ENCODE measurements at regions of chr4 and their contacts with region 1.

Region 1: DNA sequence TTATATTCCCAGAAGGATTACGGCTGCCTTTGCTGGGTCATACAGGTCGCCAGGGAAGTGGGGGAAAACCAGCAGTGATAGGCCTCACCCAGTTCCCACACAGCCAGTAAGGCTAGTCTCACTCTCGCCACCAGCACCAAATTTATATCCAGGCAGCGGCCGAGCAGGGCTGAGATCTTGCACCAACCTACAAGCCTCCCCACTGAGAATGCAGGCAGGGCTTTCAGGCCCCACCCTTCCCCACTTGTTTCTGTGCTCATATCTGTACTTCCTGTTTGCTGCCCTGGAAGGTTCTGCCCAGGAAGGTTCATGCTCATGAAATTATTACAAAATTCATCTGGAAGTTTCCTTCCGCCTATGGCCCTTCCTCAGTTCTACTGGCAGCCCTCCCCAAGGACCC is 179.7 kb downstream of the STIM2 start:
- DNase-seq: no peak
- H3K4me3 Mint-ChIP-seq: no peak overlapping the region
- H3K27ac Mint-ChIP-seq: no peak overlapping the region
- H3K4me1 Mint-ChIP-seq: peaks cover 3% of the 10 kb centered on the region
- H3K27me3 Mint-ChIP-seq: peaks cover 6% of the 10 kb centered on the region

Region 2: DNA sequence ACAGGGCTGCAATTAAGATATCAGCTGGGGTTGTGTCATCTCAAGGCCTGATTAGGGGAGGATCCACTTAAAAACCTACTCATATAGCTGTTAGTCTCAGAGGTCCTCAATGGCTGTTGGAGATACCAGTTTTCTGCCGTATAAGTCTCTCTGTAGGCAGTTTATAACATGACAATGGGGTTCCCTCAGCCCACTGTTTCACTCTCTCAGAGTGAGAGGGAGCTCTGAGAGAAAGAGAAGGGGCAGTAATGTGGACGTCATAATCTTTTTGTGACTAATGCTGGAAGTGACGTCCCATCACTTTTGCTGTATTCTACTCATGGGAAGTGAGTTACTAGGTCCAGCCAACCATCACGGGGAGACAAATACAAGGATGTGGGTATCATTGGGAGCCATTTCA is 109.4 kb before region 1 on chr4:
- CTCF ChIA-PET with region 1: no interaction called
- intact Hi-C with region 1: no loop called
- DNase-seq: no peak
- H3K4me3 Mint-ChIP-seq: no peak overlapping the region
- H3K27ac Mint-ChIP-seq: no peak overlapping the region
- H3K4me1 Mint-ChIP-seq: peaks cover 28% of the 10 kb centered on the region
- H3K27me3 Mint-ChIP-seq: no peaks in the 10 kb centered on the region

Region 3: GRCh38 chr4:27000820-27001219 is 39.5 kb before region 1 on chr4:
- CTCF ChIA-PET with region 1: no interaction called
- intact Hi-C with region 1: no loop called
- DNase-seq: peak; percentile 30
- H3K4me3 Mint-ChIP-seq: no peak overlapping the region
- H3K27ac Mint-ChIP-seq: no peak overlapping the region
- H3K4me1 Mint-ChIP-seq: peaks cover 63% of the 10 kb centered on the region
- H3K27me3 Mint-ChIP-seq: no peaks in the 10 kb centered on the region

Region 4: DNA sequence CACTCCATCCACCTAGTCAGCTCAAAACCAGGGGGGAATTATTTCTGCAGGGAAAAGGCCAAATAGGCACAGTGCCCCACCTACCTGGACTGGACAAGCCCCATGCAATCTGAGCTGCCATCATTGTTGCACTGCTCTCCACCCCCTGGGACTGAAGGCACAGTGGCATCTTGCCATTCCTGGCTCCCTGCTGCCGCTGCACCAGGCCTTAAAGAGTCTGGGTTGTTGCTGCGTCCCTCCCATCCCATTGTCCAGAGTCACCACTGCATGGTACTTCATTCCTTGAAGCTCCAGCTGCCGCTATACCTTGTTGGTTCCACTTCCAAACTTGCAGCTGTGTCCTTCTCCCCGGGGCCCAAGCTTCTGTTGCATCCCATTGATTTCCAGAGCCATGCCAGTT is 450.0 kb after region 1 on chr4:
- CTCF ChIA-PET with region 1: interaction called, 11 read pairs
- intact Hi-C with region 1: no loop called
- DNase-seq: no peak
- H3K4me3 Mint-ChIP-seq: no peak overlapping the region
- H3K27ac Mint-ChIP-seq: no peak overlapping the region
- H3K4me1 Mint-ChIP-seq: no peaks in the 10 kb centered on the region
- H3K27me3 Mint-ChIP-seq: no peaks in the 10 kb centered on the region